ENCODE measurements at regions of chr3 and their contacts with region 1.

Region 1: GRCh38 chr3:189355481-189356201 is 183.9 kb downstream of the TPRG1 start:
- DNase-seq: peak; percentile 56
- ATAC-seq: peak; percentile 92
- H3K4me3 Mint-ChIP-seq: peak overlapping the region; percentile 30
- H3K27ac Mint-ChIP-seq: peak overlapping the region; percentile 83
- H3K4me1 Mint-ChIP-seq: peaks cover 29% of the 10 kb centered on the region
- H3K27me3 Mint-ChIP-seq: no peaks in the 10 kb centered on the region

Region 2: DNA sequence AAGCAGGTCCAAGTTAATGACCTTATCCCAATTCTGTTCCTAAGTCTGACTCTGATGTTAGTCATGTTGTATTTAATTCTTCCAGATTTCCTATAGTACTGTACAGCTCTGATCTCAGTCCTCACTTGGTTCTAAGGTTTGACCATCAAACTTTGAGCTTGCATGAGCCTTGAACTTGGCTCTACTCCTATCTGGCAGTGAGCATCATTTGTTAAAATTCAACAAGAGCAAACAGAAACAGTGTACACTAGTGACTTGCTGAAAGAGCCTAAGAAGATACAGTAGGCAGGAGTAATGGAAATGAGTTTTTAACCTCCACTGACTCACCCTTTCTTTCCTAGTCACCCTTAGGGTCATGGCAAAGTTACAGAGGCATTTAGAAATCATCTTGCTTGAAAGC is 635.0 kb before region 1 on chr3:
- CTCF ChIA-PET with region 1: no interaction called
- POLR2A ChIA-PET with region 1: no interaction called
- intact Hi-C with region 1: no loop called
- DNase-seq: no peak
- ATAC-seq: peak; percentile 83
- H3K4me3 Mint-ChIP-seq: no peak overlapping the region
- H3K27ac Mint-ChIP-seq: no peak overlapping the region
- H3K4me1 Mint-ChIP-seq: peaks cover 37% of the 10 kb centered on the region
- H3K27me3 Mint-ChIP-seq: peaks cover 9% of the 10 kb centered on the region

Region 3: GRCh38 chr3:189340672-189341460 is 14.8 kb before region 1 on chr3:
- CTCF ChIA-PET with region 1: interaction called, 11 read pairs
- POLR2A ChIA-PET with region 1: interaction called, 8 read pairs
- intact Hi-C with region 1: no loop called
- DNase-seq: peak; percentile 42
- ATAC-seq: no peak
- H3K4me3 Mint-ChIP-seq: no peak overlapping the region
- H3K27ac Mint-ChIP-seq: no peak overlapping the region
- H3K4me1 Mint-ChIP-seq: peaks cover 3% of the 10 kb centered on the region
- H3K27me3 Mint-ChIP-seq: no peaks in the 10 kb centered on the region